Mammary epithelial cell (primary cell): ENCODE measurements at regions of chr1 and their contacts with region 1.

Region 1: DNA sequence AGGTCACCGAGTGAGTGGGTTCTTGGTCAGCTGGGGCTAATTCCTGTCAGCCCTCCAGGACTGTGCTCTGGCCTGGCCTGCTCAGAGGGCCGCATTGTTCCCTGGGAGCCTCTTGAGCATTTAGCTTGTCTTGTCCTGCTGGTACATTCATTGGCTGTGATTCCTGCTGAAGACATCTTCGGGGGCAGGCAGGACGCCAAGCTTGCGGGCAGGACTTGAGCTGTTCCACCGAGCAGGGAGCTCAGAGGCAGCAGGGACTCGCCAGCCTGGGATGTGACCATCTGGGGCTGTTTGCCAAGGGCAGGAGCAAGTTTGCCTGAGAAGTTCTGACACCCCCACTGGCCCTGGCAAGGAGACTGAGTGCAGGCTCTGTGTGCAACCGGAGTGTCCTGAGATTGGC is 7.0 kb upstream of the SLC26A9 start:
- DNase-seq: peak; percentile 90
- H3K4me3 ChIP-seq: no peak overlapping the region
- H3K27ac ChIP-seq: no peak overlapping the region
- H3K4me1 ChIP-seq: peaks cover 37% of the 10 kb centered on the region
- H3K27me3 ChIP-seq: peaks cover 13% of the 10 kb centered on the region
- CTCF ChIP-seq: no peak

Region 2: DNA sequence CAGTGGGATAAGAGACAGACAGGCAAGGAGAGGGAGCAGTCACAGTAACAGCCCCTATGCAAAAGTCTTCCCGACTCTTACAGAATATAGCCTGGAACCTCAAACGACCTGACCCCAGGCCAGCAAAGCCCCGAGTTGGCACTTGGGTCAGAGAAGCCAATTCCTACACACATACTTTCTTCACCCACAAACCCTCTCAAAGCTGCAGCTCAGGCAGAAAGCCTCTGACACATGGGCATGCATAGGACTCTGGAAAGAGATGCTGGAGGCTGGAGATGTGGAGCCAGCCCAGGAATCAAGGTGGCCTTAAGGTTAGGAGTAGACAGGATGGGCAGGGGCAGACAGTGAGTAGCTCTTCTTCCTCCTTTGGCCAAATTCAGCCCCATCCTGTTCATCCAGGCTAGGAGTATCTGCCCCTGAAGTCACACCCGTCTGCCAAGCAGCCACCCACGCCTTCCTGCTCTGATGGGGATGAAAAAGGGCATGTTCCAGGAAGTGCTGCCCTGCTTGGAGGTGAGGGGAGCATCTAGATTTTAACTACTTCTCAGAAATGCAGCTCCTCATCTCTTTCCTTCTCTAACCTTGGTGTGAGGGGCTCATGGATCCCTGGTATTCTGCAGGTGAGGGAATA is 145.1 kb before region 1 on chr1:
- CTCF ChIA-PET with region 1: no interaction called
- dilution Hi-C with region 1: no loop called
- in situ Hi-C with region 1: no loop called
- intact Hi-C with region 1: no loop called
- DNase-seq: peak; percentile 47
- H3K4me3 ChIP-seq: peak overlapping the region in 1 of 3 experiments; percentile 4
- H3K27ac ChIP-seq: peak overlapping the region; percentile 3
- H3K4me1 ChIP-seq: peaks cover 23% of the 10 kb centered on the region
- H3K27me3 ChIP-seq: no peaks in the 10 kb centered on the region
- CTCF ChIP-seq: no peak

Region 3: DNA sequence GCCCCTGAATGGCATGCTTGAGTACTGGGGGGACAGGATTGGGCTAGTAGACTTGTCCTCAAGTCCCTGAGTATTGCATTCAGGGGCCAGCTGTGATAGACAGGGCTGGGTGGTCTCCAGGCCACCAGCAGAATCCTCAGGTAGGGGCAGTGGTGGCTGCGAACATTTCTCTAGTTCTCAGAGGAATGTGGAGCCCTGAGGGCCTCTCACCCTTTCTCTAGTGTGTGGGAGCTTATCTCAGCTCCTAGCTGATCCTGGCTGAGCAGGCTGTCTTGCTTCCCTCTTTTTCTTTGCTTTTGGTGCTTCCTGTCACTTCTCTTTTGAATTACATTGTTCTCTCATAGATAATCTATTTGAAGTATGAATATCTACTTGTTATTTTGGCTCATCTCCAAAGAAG is 70.3 kb before region 1 on chr1:
- CTCF ChIA-PET with region 1: no interaction called
- dilution Hi-C with region 1: no loop called
- in situ Hi-C with region 1: no loop called
- intact Hi-C with region 1: no loop called
- DNase-seq: no peak
- H3K4me3 ChIP-seq: no peak overlapping the region
- H3K27ac ChIP-seq: no peak overlapping the region
- H3K4me1 ChIP-seq: no peaks in the 10 kb centered on the region
- H3K27me3 ChIP-seq: peaks cover 5% of the 10 kb centered on the region
- CTCF ChIP-seq: no peak

Region 4: DNA sequence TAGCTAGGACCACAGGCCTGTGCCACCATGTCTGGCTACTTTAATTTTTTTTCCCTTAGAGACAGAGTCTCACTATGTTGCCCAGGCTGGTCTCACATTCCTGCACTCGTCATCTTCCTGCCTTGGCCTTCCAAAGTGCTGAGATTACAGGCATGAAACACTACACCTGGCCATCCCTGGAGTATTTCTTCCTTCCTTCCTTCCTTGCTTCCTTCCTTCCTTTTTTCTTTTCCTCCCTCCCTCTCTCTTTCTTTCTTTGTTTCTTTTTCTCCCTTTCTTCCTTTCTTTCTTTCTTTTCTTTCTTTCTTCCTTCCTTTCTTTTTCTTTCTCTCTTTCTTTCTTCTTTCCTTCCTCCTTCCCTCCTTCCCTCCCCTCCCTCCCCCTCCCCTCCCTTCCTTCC is 54.0 kb before region 1 on chr1:
- CTCF ChIA-PET with region 1: no interaction called
- dilution Hi-C with region 1: no loop called
- in situ Hi-C with region 1: no loop called
- intact Hi-C with region 1: no loop called
- DNase-seq: no peak
- H3K4me3 ChIP-seq: no peak overlapping the region
- H3K27ac ChIP-seq: no peak overlapping the region
- H3K4me1 ChIP-seq: no peaks in the 10 kb centered on the region
- H3K27me3 ChIP-seq: no peaks in the 10 kb centered on the region
- CTCF ChIP-seq: no peak

Region 5: DNA sequence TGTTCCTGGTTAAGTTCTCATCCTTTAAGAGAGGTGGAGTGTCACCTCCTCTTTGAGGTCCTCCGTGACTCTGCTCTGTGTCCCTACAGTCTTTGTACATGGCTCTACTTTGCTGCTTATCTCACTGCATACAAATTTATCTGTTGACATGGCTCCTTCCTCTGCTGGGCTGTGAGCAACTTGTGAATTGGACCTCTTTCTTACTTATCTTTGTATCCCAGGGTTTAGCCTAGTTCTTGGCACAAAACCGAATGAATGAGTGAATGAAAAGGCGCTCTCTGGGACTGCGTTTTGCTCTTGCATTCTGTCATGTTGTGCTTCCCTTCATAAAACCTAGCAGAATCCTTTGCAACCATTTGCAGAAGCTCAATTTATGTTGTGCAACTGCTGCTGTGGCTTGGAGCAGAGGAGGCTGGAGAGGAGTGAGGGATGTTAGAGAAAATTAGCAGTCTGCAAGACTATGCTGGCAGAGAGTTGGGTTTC is 19.4 kb before region 1 on chr1:
- CTCF ChIA-PET with region 1: no interaction called
- dilution Hi-C with region 1: no loop called
- in situ Hi-C with region 1: no loop called
- intact Hi-C with region 1: loop called (anchors 2 kb)
- DNase-seq: no peak
- H3K4me3 ChIP-seq: no peak overlapping the region
- H3K27ac ChIP-seq: no peak overlapping the region
- H3K4me1 ChIP-seq: peaks cover 11% of the 10 kb centered on the region
- H3K27me3 ChIP-seq: peaks cover 8% of the 10 kb centered on the region
- CTCF ChIP-seq: no peak

Region 6: DNA sequence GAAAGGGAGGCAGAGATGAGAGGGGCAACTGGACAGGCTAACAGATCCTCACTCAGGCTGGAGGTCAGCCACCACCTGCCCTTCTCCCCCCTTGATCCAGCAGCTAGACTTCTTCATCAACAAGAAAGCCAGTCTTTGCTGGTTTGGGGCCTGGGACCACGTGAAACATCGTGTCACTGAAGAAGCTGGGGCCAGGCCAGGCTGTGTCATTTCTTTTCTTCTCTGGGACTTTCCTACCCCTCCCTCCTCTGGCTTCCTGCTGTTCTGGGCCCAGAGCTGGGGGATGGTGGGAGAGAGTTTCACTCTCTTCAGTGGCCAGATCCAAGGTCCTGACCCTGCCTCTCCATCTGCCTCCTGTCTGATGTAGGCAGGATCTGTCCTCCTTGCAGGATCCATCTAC is 11.1 kb after region 1 on chr1:
- CTCF ChIA-PET with region 1: interaction called, 3 read pairs
- dilution Hi-C with region 1: no loop called
- in situ Hi-C with region 1: no loop called
- intact Hi-C with region 1: loop called (anchors 1 kb)
- DNase-seq: no peak
- H3K4me3 ChIP-seq: no peak overlapping the region
- H3K27ac ChIP-seq: no peak overlapping the region
- H3K4me1 ChIP-seq: peaks cover 13% of the 10 kb centered on the region
- H3K27me3 ChIP-seq: peaks cover 5% of the 10 kb centered on the region
- CTCF ChIP-seq: no peak